ENCODE measurements at regions of chr19 and their contacts with region 1.

Region 1: GRCh38 chr19:34041925-34042521 is 130.3 kb upstream of the LSM14A start:
- DNase-seq: peak; percentile 66 to 73
- H3K4me3 ChIP-seq: no peak overlapping the region
- H3K27ac ChIP-seq: no peak overlapping the region
- H3K4me1 ChIP-seq: no peaks in the 10 kb centered on the region
- H3K27me3 ChIP-seq: no peaks in the 10 kb centered on the region
- CTCF ChIP-seq: peak; percentile 53 to 87 (median 59)
- POLR2A ChIP-seq: no peak

Region 2: DNA sequence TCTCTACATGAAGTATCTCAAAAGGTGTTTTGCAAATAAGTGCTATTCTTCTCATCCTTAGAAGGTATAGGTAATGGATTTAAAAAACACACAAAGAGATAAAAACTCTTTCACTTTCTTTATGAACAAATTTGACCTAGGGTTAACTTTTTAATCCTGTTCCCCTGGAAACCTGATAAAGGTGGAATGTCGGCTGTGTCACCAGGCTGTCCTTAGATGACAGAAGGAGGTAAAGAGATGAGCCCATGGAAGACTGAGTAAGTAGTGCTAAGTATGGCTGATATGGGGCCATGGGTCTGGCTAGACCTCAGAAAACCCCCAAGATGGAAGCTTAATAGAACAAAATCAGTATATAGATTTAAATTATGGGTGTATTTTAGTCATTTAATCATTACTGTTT is 23.5 kb before region 1 on chr19:
- intact Hi-C with region 1: no loop called
- DNase-seq: no peak
- H3K4me3 ChIP-seq: no peak overlapping the region
- H3K27ac ChIP-seq: no peak overlapping the region
- H3K4me1 ChIP-seq: no peaks in the 10 kb centered on the region
- H3K27me3 ChIP-seq: no peaks in the 10 kb centered on the region
- CTCF ChIP-seq: no peak
- POLR2A ChIP-seq: no peak

Region 3: GRCh38 chr19:34096020-34096915 is 54.2 kb after region 1 on chr19:
- intact Hi-C with region 1: no loop called
- DNase-seq: no peak
- H3K4me3 ChIP-seq: no peak overlapping the region
- H3K27ac ChIP-seq: no peak overlapping the region
- H3K4me1 ChIP-seq: no peaks in the 10 kb centered on the region
- H3K27me3 ChIP-seq: no peaks in the 10 kb centered on the region
- CTCF ChIP-seq: peak in 5 of 6 experiments; percentile 18 to 62 (median 57)
- POLR2A ChIP-seq: no peak

Region 4: DNA sequence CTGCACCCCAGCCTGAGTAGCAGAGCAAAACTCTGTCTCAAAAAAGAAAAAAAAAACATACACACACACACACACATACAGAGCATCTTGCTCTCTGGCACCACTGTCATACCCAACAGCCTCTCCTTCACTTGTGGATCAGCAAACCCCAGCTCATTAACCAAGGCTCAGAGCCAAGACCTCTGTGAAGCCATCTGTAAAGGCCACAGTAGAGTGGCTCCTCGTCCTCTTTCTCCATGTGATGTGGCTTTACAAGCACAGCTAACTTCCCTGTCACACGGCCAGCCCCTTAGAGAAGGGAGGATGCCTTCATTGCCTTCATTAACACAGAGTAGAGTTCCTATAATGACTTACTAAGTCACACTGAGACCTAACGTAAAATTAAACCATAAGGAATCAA is 67.6 kb after region 1 on chr19:
- intact Hi-C with region 1: no loop called
- DNase-seq: peak; percentile 44 to 60
- H3K4me3 ChIP-seq: no peak overlapping the region
- H3K27ac ChIP-seq: no peak overlapping the region
- H3K4me1 ChIP-seq: no peaks in the 10 kb centered on the region
- H3K27me3 ChIP-seq: no peaks in the 10 kb centered on the region
- CTCF ChIP-seq: no peak
- POLR2A ChIP-seq: no peak

Region 5: GRCh38 chr19:34145741-34146202 is 103.7 kb after region 1 on chr19:
- intact Hi-C with region 1: loop called (anchors 5 kb)
- DNase-seq: peak; percentile 23 to 27
- H3K4me3 ChIP-seq: no peak overlapping the region
- H3K27ac ChIP-seq: no peak overlapping the region
- H3K4me1 ChIP-seq: no peaks in the 10 kb centered on the region
- H3K27me3 ChIP-seq: no peaks in the 10 kb centered on the region
- CTCF ChIP-seq: peak; percentile 53 to 85 (median 74)
- POLR2A ChIP-seq: no peak

Measured in thyroid gland (tissue), 4 donors.